ENCODE measurements at regions of chr3 and their contacts with region 1.

Region 1: DNA sequence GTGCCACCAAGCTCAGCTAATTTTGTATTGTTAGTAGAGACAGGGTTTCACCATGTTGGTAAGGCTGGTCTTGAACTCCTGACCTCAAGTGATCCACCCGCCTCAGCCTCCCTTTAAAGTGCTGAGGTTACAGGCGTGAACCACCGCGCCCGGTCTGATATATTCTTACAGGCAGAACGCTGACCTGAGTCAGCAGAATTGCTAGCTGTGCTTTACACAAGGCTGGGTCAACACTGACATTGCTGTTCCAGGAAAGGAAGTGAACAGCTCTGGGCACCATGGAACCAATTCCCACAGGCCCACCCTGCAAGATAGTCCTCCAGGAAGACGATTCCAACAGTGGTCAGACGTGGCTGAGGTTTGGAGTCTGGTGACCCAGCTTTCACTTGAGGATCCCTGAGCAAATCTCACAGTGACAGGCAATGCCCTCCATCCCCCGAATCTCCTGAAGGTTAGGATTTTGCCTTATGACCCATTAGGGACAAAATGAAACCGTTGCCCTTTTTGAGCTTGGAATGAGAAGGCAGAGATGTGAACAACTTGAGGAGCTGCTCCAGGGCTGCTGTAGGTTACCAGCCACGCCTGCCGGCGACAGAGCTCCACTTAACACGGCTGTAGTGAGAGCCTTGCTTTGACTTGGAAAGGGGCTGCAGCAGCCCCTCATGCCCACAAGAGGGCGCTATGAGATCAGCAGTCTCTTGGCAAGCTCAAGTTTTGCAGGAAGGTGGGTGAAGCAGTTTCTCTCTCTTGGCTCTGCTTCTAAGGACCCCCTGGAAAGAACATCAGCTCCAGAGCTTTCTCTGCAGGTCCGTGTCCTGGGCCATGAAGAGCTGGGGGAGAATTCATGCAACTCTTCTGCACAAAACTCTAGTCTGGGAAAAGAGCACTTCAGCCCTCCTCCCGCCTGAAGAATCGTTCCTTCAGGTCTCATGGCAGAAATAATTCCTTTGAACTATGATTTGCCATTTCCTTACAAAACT is 74.1 kb downstream of the SENP2 start:
- DNase-seq: peak; percentile 68
- ATAC-seq: peak; percentile 86
- H3K4me3 ChIP-seq: no peak overlapping the region
- H3K27ac ChIP-seq: no peak overlapping the region
- H3K4me1 ChIP-seq: peaks cover 3% of the 10 kb centered on the region; the same call in 1 of the 2 replicates
- H3K27me3 ChIP-seq: no peaks in the 10 kb centered on the region
- CTCF ChIP-seq: peak; percentile 99

Region 2: DNA sequence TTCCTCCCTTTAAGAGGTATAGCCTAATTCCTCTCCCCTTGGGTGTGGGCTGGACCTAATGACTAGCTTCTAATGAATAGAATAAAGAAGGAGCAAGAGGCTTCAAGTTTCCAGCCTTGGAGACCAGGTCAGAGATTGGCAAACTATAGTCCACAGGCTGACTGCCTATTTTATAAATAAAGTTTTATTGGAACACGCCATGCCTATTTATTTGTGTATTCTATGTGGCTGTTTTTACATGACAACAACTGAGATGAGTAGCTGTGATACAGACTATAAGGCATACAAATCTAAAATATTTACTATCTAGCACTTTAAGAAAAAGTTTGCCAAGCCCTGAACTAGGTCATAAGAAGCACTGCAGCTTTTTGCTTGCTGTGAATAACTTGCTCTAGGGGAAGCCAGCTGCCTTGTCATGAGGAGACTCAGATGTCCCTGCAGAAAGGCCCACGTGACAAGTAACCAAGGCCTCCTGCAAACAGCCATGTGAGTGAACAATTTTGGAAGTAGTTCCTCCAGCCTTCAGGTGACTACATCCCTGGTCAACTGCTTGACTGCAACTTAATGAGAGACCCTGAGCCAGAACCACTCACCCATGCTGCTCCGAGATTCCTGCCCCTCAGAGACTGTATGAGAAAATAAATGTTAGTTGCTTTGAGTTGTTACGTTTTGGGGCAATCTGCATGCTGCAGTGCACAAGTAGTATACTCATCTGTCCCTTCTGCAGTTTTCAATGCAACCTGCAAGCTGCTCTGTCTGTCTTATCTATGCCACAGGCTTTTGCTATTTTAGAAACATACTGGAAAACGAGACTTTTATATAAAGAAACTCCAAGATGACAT is 318.4 kb before region 1 on chr3:
- CTCF ChIA-PET with region 1: interaction called, 10 read pairs
- POLR2A ChIA-PET with region 1: no interaction called
- in situ Hi-C with region 1: no loop called
- intact Hi-C with region 1: no loop called
- DNase-seq: no peak
- ATAC-seq: peak; percentile 63
- H3K4me3 ChIP-seq: no peak overlapping the region
- H3K27ac ChIP-seq: no peak overlapping the region
- H3K4me1 ChIP-seq: peaks cover 22% of the 10 kb centered on the region
- H3K27me3 ChIP-seq: no peaks in the 10 kb centered on the region
- CTCF ChIP-seq: no peak

Region 3: DNA sequence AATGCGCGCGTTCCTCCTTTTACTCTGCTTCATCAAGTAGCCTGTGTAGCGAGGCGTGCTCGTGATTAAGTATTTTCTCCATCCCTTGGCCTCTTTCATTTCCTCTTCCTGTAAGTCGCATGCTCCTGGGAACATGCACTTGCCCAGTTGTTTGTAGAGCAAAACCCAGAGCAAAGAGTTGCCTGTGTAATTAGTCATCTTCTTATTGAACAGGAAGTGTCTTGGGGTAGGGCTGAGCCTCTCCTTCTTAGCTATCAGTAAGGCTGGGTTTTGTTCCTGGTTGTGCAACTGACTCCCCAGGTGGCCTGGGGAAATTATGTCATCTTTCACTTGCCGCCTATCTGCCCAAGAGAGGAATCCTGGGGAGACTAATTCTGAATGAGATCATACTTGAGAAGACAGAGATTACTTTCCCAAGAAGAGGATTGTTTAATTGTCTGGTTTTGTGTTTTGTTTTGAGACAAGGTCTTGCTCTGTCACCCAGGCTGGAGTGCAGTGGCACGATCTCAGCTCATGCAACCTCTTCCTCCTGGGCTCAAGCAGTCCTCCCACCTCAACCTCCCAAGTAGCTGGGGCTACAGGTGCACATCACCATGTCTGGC is 122.8 kb before region 1 on chr3:
- CTCF ChIA-PET with region 1: no interaction called
- POLR2A ChIA-PET with region 1: no interaction called
- in situ Hi-C with region 1: no loop called
- intact Hi-C with region 1: no loop called
- DNase-seq: peak; percentile 84
- ATAC-seq: peak; percentile 94
- H3K4me3 ChIP-seq: peak overlapping the region in 1 of 2 experiments; percentile 7; a peak in 1 of 4 replicates
- H3K27ac ChIP-seq: peak overlapping the region; percentile 36
- H3K4me1 ChIP-seq: peaks cover 9% of the 10 kb centered on the region
- H3K27me3 ChIP-seq: no peaks in the 10 kb centered on the region
- CTCF ChIP-seq: no peak

Region 4: GRCh38 chr3:185645596-185646381 is 14.4 kb before region 1 on chr3:
- CTCF ChIA-PET with region 1: interaction called, 6 read pairs
- POLR2A ChIA-PET with region 1: interaction called, 17 read pairs
- in situ Hi-C with region 1: no loop called
- intact Hi-C with region 1: no loop called
- DNase-seq: no peak
- ATAC-seq: peak; percentile 50
- H3K4me3 ChIP-seq: no peak overlapping the region
- H3K27ac ChIP-seq: no peak overlapping the region
- H3K4me1 ChIP-seq: no peaks in the 10 kb centered on the region
- H3K27me3 ChIP-seq: no peaks in the 10 kb centered on the region
- CTCF ChIP-seq: no peak

Region 5: DNA sequence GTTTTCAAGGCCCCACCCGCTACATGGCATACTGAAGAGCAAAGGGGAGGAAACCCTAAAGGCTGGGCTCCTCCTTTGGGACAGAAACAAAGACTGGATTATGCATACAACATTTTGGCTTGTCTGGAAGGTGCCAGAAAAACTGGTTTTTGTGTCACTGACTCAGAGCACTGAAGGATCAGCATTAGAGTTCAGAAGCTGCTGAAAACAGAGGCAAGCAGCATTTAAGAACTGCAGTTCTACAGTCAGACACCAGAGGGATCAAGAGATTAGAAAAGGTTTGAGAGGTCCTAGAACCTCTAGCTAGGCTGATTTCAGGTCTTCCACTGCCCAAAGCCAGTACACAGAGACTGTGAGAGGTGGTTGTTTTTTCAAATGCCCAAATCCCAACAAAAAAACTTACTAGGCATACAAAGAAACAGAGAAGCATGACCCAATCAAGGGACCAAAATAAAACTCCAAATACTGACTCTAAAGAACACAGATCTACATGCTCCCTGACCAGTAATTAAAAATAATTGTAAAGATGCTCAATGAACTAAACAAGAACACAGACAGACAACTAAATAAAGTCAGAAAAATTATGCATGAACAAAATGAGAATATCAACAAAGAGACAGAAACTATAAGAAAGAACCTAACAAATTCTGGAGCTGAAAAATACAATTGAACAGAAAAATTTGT is 17.1 kb after region 1 on chr3:
- CTCF ChIA-PET with region 1: interaction called, 10 read pairs
- POLR2A ChIA-PET with region 1: interaction called, 5 read pairs
- in situ Hi-C with region 1: no loop called
- intact Hi-C with region 1: no loop called
- DNase-seq: peak; percentile 69
- ATAC-seq: peak; percentile 94
- H3K4me3 ChIP-seq: no peak overlapping the region
- H3K27ac ChIP-seq: no peak overlapping the region
- H3K4me1 ChIP-seq: no peaks in the 10 kb centered on the region
- H3K27me3 ChIP-seq: no peaks in the 10 kb centered on the region
- CTCF ChIP-seq: peak; percentile 85

Region 6: DNA sequence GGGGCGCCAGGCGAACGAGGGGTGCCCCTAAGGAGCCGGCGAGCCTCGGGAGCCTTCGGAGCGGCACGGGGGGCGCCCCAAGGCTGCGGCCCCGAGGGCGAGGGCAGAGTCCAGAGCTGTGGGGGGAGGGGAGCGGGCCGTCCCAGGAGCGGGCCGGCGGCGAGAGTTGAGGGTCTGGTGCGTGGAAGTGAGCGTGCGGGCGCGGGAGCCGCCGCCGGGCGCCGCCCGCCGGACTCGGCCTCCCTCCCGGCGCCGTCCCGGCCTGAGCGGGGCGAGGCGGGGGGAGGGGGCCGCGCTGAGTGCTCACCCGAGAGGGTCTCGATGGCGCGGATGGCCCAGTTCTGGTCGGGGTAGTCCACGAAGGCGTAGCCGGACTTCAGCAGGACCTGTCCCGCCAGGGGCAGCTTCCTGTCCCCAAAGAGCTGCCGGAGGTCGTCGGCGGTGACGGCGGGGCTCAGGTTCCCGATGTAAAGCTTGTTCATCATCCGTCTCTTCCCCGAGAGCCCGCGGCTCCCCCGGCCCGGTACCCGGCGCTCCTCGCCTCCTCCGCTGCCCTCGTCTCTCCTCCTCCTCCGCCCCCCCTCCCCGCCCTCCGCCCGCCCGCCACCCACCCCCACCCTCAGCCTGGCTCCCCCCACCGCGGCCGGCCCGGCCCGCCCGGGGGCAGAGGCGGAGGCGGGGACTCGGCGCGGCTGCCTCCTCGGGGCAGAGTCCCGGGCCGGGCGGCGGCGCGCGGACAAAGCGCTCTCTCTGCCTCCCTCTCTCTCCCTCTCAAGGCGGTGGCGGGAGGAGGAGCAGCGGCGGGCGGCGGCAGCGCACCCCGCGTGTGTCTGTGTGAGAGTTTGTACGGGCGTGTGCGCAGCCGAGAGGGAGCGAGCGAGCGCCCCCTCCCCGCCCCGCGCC is 164.5 kb after region 1 on chr3 and contains the start of gene IGF2BP2:
- CTCF ChIA-PET with region 1: no interaction called
- POLR2A ChIA-PET with region 1: no interaction called
- in situ Hi-C with region 1: no loop called
- intact Hi-C with region 1: loop called (anchors 10 kb)
- DNase-seq: no peak
- ATAC-seq: peak; percentile 83
- H3K4me3 ChIP-seq: peak within 1 kb of the TSS; percentile 86 to 89
- H3K27ac ChIP-seq: peak within 1 kb of the TSS; percentile 83
- H3K4me1 ChIP-seq: peaks cover 31% of the 10 kb centered on the region
- H3K27me3 ChIP-seq: no peaks in the 10 kb centered on the region
- CTCF ChIP-seq: peak; percentile 35; the same call in 1 of the 2 replicates
- total RNA-seq, gene IGF2BP2: 97.8 TPM

Region 7: DNA sequence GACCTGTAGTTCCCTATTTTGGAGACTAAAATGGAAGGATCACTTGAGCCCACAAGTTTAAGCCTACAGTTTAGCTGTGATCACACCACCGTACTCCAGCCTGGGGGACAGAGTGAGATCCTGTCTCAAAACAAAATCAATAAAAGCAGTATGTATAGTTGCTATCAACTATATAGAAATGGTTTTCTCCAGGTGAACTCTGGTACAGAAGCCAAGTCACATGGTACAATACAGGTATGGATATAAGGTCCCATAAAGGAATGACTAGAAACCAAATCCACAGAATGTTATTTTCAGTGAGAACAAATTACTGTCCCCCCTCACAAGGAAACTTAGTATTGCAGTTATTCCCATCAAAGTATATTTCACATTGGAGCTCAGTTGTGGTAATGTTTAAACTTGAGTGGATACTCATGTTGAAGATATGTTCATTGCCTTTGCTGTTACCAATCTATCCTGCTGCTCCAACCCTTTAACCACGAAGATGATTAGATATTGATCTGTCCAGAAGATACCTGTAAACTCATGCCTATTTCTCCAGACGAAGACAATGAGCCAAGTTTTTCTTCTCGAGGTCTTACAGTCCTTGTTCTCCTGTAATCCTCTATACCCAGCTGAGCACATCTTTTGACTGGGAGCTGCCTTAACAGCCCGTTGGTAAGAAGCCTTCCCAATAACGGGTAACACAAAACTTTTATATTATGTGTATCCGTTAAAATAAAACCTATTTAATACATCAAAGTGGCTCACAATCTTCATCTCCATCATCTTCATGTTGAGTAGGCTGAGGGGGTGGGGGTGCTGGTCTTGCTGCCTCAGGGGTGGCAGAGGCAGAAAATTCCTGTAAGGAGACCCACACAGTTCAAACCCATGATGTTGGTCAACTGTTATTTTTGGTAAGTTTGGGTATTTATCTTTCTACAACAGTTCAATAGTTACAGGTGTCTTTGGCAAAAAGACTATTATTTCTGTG is 253.0 kb after region 1 on chr3:
- CTCF ChIA-PET with region 1: interaction called, 14 read pairs
- POLR2A ChIA-PET with region 1: no interaction called
- in situ Hi-C with region 1: no loop called
- intact Hi-C with region 1: loop called (anchors 5 kb)
- DNase-seq: no peak
- ATAC-seq: peak; percentile 35; the same call in 1 of the 2 replicates
- H3K4me3 ChIP-seq: no peak overlapping the region
- H3K27ac ChIP-seq: no peak overlapping the region
- H3K4me1 ChIP-seq: peaks cover 14% of the 10 kb centered on the region
- H3K27me3 ChIP-seq: no peaks in the 10 kb centered on the region
- CTCF ChIP-seq: no peak